ENCODE measurements at regions of chr20 and their contacts with region 1.

Region 1: DNA sequence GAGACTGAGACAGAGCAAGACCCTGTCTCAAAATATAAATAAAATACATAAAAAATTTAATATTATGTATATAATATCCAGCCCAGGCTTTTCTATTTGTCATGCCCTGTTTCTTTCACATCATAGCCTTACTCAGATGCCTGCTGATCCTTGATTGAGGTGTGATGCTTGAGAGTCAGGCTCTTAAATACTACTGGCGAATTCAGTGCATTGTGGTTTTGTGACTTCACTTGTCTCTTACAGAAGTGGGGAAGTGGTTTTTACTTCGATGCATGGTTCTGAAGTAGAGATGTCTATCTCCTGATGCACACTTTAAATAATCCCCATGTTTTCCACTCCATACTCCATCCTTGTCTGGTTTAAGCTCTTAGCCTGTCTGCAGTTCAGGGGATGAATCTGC is 29.1 kb downstream of the ASXL1 start:
- DNase-seq: no peak
- H3K4me3 ChIP-seq: no peak overlapping the region
- H3K27ac ChIP-seq: no peak overlapping the region
- H3K4me1 ChIP-seq: peaks cover 4% of the 10 kb centered on the region
- H3K27me3 ChIP-seq: no peaks in the 10 kb centered on the region
- CTCF ChIP-seq: no peak

Region 2: GRCh38 chr20:32329817-32330554 is 57.3 kb before region 1 on chr20:
- CTCF ChIA-PET with region 1: interaction called, 12 read pairs
- dilution Hi-C with region 1: no loop called
- in situ Hi-C with region 1: no loop called
- intact Hi-C with region 1: no loop called
- DNase-seq: no peak
- H3K4me3 ChIP-seq: no peak overlapping the region
- H3K27ac ChIP-seq: no peak overlapping the region
- H3K4me1 ChIP-seq: peaks cover 20% of the 10 kb centered on the region
- H3K27me3 ChIP-seq: no peaks in the 10 kb centered on the region
- CTCF ChIP-seq: no peak

Region 3: DNA sequence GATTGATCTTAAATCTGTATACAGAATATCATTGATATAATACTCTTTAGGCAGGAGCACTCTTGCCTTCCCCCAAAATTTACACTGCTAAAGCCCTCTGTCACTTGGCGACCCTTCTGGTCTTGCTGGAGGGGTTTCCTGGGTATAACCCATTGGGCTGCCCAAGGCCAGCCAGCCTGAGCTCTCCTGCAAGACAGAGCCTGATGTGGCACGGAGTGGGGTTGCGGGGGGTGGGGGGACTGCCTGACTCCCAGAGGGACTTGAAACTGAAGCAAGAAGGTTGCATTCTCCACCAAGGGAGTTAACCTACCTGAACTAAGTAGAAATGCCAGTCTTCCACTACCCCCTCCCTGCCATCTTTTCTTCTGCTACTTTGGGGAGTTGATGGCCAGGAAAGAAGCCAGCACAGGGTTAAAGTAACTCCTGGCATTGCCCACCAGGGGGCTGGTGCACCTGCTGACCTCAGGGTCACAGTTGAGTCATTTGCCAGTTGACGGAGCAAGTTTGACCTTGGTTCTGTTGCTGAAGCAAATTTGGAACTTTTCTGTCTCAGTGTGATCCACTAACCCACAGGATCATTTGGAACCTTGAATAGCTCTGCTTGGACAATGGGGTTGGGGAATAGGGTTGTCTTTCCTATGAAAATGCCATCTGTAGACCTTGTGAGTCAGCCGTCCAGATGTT is 50.3 kb after region 1 on chr20:
- CTCF ChIA-PET with region 1: no interaction called
- dilution Hi-C with region 1: loop called (anchors 5 kb)
- in situ Hi-C with region 1: no loop called
- intact Hi-C with region 1: no loop called
- DNase-seq: no peak
- H3K4me3 ChIP-seq: no peak overlapping the region
- H3K27ac ChIP-seq: no peak overlapping the region
- H3K4me1 ChIP-seq: no peaks in the 10 kb centered on the region
- H3K27me3 ChIP-seq: no peaks in the 10 kb centered on the region
- CTCF ChIP-seq: peak; percentile 24 to 27

Region 4: GRCh38 chr20:32535953-32536823 is 148.9 kb after region 1 on chr20:
- CTCF ChIA-PET with region 1: no interaction called
- dilution Hi-C with region 1: no loop called
- in situ Hi-C with region 1: no loop called
- intact Hi-C with region 1: no loop called
- DNase-seq: no peak
- H3K4me3 ChIP-seq: peak overlapping the region in 2 of 3 experiments; percentile 34 to 49
- H3K27ac ChIP-seq: no peak overlapping the region
- H3K4me1 ChIP-seq: peaks cover 11% of the 10 kb centered on the region
- H3K27me3 ChIP-seq: no peaks in the 10 kb centered on the region
- CTCF ChIP-seq: no peak